Activated naive CD4-positive, alpha-beta T cell treated with anti-CD3 and anti-CD28 coated beads for 36 hours (primary cell): ENCODE measurements at regions of chr16 and their contacts with region 1.

Region 1: GRCh38 chr16:24800586-24800985 is 45.2 kb upstream of the SLC5A11 start:
- DNase-seq: no peak
- H3K4me3 Mint-ChIP-seq: no peak overlapping the region
- H3K27ac Mint-ChIP-seq: no peak overlapping the region
- H3K4me1 Mint-ChIP-seq: no peaks in the 10 kb centered on the region
- H3K27me3 Mint-ChIP-seq: no peaks in the 10 kb centered on the region

Region 2: GRCh38 chr16:24568392-24568791 is 232.2 kb before region 1 on chr16:
- CTCF ChIA-PET with region 1: no interaction called
- intact Hi-C with region 1: loop called (anchors 10 kb)
- DNase-seq: no peak
- H3K4me3 Mint-ChIP-seq: no peak overlapping the region
- H3K27ac Mint-ChIP-seq: no peak overlapping the region
- H3K4me1 Mint-ChIP-seq: peaks cover 6% of the 10 kb centered on the region
- H3K27me3 Mint-ChIP-seq: no peaks in the 10 kb centered on the region

Region 3: GRCh38 chr16:24729362-24729984 is 71.1 kb before region 1 on chr16 and contains the start of gene TNRC6A:
- CTCF ChIA-PET with region 1: no interaction called
- intact Hi-C with region 1: no loop called
- DNase-seq: peak; percentile 77
- H3K4me3 Mint-ChIP-seq: peak within 1 kb of the TSS; percentile 96
- H3K27ac Mint-ChIP-seq: peak within 1 kb of the TSS; percentile 96
- H3K4me1 Mint-ChIP-seq: peaks cover 48% of the 10 kb centered on the region
- H3K27me3 Mint-ChIP-seq: no peaks in the 10 kb centered on the region
- total RNA-seq, gene TNRC6A: 37.2 to 39.0 TPM